ENCODE measurements at regions of chr11 and their contacts with region 1.

Region 1: DNA sequence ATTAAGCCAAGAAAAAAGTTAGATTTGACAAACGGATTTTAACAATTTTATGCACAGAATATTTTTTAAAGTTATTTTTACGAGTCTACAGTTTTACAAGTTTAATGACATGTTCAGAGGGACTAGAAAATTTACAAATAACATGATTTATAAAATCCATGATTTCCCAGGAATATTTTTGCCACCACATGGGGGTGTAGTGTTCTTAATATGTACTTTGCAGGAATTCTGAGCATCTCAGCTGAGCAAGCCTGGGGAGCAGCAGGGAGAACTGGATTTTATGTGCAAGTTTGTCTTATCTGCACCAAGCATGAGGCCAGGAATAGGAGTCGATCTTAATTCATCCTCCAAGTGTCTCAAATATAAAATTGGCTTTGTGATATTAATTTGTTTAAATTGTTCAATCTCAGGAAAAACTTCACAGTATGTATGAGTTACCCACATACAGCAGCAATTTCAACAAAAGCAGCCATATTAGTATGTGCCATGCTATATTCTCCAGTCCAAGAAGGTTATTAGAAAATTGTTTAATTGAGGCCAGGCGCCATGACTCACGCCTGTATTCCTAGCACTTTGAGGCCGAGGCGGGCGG is 826.3 kb downstream of the DLG2 start:
- DNase-seq: peak; percentile 6
- H3K4me3 Mint-ChIP-seq: no peak overlapping the region
- H3K27ac Mint-ChIP-seq: no peak overlapping the region
- H3K4me1 Mint-ChIP-seq: no peaks in the 10 kb centered on the region
- H3K27me3 Mint-ChIP-seq: peaks cover 27% of the 10 kb centered on the region
- CTCF ChIP-seq: no peak

Region 2: DNA sequence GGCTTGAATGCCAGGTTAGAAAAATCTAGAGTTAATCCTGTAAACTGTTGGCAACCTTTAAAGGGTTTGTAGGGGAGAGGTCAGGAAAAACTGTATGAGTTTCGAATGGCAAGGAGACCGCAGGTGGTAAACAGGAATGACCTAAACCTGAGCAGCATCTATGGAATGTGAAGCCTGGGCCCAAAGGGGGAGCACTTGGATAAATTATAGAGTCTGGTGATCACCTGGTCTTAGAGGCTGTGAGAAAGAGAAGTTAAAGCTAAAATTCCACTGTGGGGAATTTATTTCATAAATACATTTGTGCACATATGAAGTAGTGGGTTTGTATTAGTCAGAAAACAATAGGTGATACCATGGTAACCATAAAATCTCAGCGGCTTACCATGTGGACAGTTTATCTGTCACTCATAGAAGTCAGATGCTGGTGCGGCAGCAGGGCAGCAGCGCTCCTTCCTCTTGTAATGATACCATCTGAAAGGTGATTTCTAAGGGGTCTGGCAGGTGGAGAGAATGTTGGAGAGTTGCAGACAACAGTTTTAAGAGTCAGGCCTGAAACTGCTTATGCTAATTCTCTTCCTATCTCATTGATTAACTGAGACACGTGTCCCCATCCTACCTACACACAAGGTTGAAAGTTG is 410.3 kb before region 1 on chr11:
- CTCF ChIA-PET with region 1: no interaction called
- intact Hi-C with region 1: no loop called
- DNase-seq: peak; percentile 23
- H3K4me3 Mint-ChIP-seq: no peak overlapping the region
- H3K27ac Mint-ChIP-seq: no peak overlapping the region
- H3K4me1 Mint-ChIP-seq: peaks cover 8% of the 10 kb centered on the region
- H3K27me3 Mint-ChIP-seq: no peaks in the 10 kb centered on the region
- CTCF ChIP-seq: no peak

Region 3: DNA sequence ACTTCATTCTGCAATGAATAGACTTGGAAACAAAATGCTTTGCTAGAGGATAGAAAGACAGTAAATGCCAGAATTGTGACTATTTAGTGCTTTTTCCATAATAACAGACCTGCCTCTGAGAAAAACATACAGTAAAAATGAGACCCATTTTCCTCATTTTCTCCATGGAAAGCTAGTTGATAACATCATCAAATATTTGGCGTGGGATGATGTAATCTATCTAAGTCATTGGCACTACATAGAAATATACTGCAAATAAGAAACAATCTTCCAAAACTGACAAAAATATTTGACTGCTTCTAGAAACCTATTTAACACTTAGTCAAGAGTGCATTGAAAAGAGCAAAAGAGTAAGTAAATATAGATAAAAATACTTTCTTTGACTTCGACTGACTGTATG is 210.3 kb after region 1 on chr11:
- CTCF ChIA-PET with region 1: no interaction called
- intact Hi-C with region 1: loop called (anchors 10 kb)
- DNase-seq: no peak
- H3K4me3 Mint-ChIP-seq: no peak overlapping the region
- H3K27ac Mint-ChIP-seq: no peak overlapping the region
- H3K4me1 Mint-ChIP-seq: no peaks in the 10 kb centered on the region
- H3K27me3 Mint-ChIP-seq: no peaks in the 10 kb centered on the region
- CTCF ChIP-seq: no peak

Measured in Calu3 (cell line).